ENCODE measurements at regions of chr2 and their contacts with region 1.

Region 1: DNA sequence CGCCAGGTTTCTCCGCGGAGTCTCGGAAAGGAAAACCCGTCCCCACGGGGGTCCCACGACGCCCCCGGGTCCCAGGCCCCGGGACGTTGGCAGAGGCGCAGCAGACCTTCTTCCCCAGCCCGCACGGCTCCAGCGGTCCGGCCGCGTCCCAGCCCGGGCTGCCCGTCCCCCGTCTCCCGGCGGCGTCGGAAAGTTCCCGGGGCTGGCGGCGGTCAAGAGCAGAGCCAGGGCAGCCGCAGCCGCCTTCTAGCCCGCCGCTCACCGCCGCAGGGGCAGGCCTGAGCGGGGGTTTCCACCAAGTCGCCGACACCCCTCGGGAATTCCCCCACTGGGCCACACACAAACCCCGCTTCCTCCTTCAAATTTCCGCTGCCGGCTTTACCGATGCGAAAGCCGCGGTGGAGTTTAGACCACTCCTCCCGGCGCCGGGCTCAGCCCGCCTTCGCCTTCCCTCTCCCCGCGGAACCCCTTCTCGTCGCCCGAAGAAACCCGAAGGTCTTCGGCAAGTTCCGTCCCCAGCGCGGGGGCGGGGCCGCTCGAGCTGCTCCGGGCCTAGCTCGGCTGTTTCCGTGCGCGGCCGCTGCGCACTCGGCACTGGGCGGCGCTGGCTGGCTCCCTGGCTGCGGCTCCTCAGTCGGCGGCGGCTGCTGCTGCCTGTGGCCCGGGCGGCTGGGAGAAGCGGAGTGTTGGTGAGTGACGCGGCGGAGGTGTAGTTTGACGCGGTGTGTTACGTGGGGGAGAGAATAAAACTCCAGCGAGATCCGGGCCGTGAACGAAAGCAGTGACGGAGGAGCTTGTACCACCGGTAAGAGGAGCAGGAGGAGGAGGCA is at the start of gene CREB1:
- DNase-seq: peak; percentile 97 to 99
- H3K4me3 ChIP-seq: peak within 1 kb of the TSS; percentile 80 to 95
- H3K27ac ChIP-seq: peak within 1 kb of the TSS; percentile 96 to 97
- H3K4me1 ChIP-seq: peaks cover 7 to 30% of the 10 kb centered on the region in 2 donors
- H3K27me3 ChIP-seq: no peaks in the 10 kb centered on the region
- CTCF ChIP-seq: peak in 1 of 3 experiments; percentile 1
- total RNA-seq, gene CREB1: 12.8 TPM

Region 2: GRCh38 chr2:206968134-206969086 is 561.1 kb before region 1 on chr2:
- intact Hi-C with region 1: loop called (anchors 5 kb)
- DNase-seq: peak in 1 of 2 donors; percentile 80
- H3K4me3 ChIP-seq: peak overlapping the region in 1 of 2 donors; percentile 28
- H3K27ac ChIP-seq: peak overlapping the region; percentile 75 to 78
- H3K4me1 ChIP-seq: peaks cover 4 to 21% of the 10 kb centered on the region in 2 donors
- H3K27me3 ChIP-seq: no peaks in the 10 kb centered on the region
- CTCF ChIP-seq: no peak

Region 3: GRCh38 chr2:207504513-207505171 is 24.9 kb before region 1 on chr2:
- intact Hi-C with region 1: loop called (anchors 1 kb)
- DNase-seq: no peak
- H3K4me3 ChIP-seq: peak overlapping the region in 1 of 2 donors; percentile 44
- H3K27ac ChIP-seq: peak overlapping the region; percentile 64 to 85
- H3K4me1 ChIP-seq: peaks cover 0 to 18% of the 10 kb centered on the region in 2 donors
- H3K27me3 ChIP-seq: no peaks in the 10 kb centered on the region
- CTCF ChIP-seq: no peak

Region 4: DNA sequence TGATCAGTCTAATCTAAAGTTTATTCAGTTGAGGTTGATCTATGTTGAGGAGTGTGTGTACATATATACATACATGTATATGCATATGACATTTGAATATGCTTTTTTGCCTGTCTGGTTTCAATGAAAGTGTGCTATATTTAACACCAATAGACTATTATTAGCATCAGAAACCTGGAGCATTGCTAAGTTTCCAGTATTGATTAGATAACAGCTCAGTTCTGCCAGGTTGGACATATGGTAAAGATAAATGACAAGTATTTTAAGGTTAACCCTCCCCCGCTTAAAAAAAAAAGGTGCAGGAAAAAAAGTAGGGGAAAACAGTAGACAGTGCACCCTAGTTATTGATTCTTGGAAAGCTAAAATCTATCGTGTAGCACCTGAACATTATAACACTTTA is 19.6 kb after region 1 on chr2:
- intact Hi-C with region 1: loop called (anchors 2 kb)
- DNase-seq: no peak
- H3K4me3 ChIP-seq: peak overlapping the region; percentile 3 to 44
- H3K27ac ChIP-seq: peak overlapping the region; percentile 62 to 65
- H3K4me1 ChIP-seq: peaks cover 3 to 15% of the 10 kb centered on the region in 2 donors
- H3K27me3 ChIP-seq: no peaks in the 10 kb centered on the region
- CTCF ChIP-seq: no peak

Region 5: GRCh38 chr2:208265801-208266552 is 736.4 kb after region 1 on chr2 and contains the start of gene PIKFYVE:
- intact Hi-C with region 1: loop called (anchors 10 kb)
- DNase-seq: peak; percentile 88 to 98
- H3K4me3 ChIP-seq: peak within 1 kb of the TSS; percentile 93 to 100
- H3K27ac ChIP-seq: peak within 1 kb of the TSS; percentile 97 to 98
- H3K4me1 ChIP-seq: peaks cover 0 to 21% of the 10 kb centered on the region in 2 donors
- H3K27me3 ChIP-seq: no peaks in the 10 kb centered on the region
- CTCF ChIP-seq: no peak
- total RNA-seq, gene PIKFYVE: 12.0 TPM